ENCODE measurements at regions of chr7 and their contacts with region 1.

Region 1: DNA sequence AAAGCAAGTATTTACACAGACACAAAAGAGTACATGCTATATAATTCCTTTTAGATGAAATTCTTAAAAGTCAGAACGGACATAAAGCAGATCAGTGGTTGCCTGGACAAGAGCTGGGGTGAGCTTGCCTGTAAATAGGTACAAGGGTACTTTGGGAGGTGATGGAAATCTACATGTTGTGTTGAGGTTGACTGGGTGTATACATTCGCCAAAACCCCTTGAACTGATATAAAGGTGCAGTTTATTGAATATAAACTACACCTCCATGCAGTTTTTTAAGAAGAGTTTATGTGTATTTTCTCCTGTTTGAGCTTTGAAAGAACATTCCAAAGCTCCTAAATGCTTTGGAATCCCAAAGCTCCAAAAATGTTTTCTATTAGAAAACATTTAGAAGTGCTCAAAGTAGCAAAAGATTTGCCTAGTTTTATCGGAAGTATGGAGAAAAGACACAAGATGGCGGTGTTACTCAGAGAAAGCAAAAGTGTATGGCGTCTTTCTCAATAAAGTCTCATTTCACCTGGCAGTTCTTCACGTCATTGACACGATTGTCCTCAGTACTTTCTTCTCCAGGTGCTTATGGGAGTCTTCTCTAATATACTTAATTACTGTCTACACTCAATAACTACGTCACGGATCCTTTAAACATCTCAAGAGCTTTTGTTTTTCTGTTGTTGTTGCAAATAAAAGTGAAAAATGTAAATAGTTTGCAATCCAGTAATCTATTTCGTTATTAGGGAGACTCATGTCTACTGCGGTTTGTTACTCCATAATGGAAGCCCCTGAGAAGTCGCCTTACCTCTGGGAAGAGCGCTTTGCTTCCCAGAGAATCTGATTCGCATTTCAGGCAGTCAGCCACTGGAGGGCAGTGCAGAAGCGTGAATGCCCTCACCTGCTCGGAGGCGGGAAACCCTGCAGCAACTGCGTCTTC is 14.7 kb upstream of the SEC61G start:
- DNase-seq: peak; percentile 84
- ATAC-seq: peak; percentile 95
- H3K4me3 ChIP-seq: peak overlapping the region; percentile 31; the same call in 1 of the 2 replicates
- H3K27ac ChIP-seq: no peak overlapping the region
- H3K4me1 ChIP-seq: no peaks in the 10 kb centered on the region
- H3K27me3 ChIP-seq: no peaks in the 10 kb centered on the region
- CTCF ChIP-seq: peak; percentile 92
- POLR2A ChIP-seq: peak; percentile 53; the same call in 1 of the 2 replicates
- RAD21 ChIP-seq: peak; percentile 99

Region 2: GRCh38 chr7:54729107-54729506 is 44.6 kb before region 1 on chr7:
- CTCF ChIA-PET with region 1: no interaction called
- POLR2A ChIA-PET with region 1: no interaction called
- dilution Hi-C with region 1: no loop called
- in situ Hi-C with region 1: no loop called
- intact Hi-C with region 1: no loop called
- DNase-seq: no peak
- ATAC-seq: no peak
- H3K4me3 ChIP-seq: no peak overlapping the region
- H3K27ac ChIP-seq: no peak overlapping the region
- H3K4me1 ChIP-seq: no peaks in the 10 kb centered on the region
- H3K27me3 ChIP-seq: no peaks in the 10 kb centered on the region
- CTCF ChIP-seq: no peak
- POLR2A ChIP-seq: no peak
- RAD21 ChIP-seq: no peak

Region 3: GRCh38 chr7:54874804-54875203 is 101.1 kb after region 1 on chr7:
- CTCF ChIA-PET with region 1: no interaction called
- POLR2A ChIA-PET with region 1: no interaction called
- dilution Hi-C with region 1: no loop called
- in situ Hi-C with region 1: no loop called
- intact Hi-C with region 1: no loop called
- DNase-seq: peak; percentile 52
- ATAC-seq: peak; percentile 59; the same call in 1 of the 2 replicates
- H3K4me3 ChIP-seq: no peak overlapping the region
- H3K27ac ChIP-seq: no peak overlapping the region
- H3K4me1 ChIP-seq: peaks cover 1% of the 10 kb centered on the region; the same call in 1 of the 2 replicates
- H3K27me3 ChIP-seq: no peaks in the 10 kb centered on the region
- CTCF ChIP-seq: no peak
- POLR2A ChIP-seq: no peak
- RAD21 ChIP-seq: no peak

Region 4: DNA sequence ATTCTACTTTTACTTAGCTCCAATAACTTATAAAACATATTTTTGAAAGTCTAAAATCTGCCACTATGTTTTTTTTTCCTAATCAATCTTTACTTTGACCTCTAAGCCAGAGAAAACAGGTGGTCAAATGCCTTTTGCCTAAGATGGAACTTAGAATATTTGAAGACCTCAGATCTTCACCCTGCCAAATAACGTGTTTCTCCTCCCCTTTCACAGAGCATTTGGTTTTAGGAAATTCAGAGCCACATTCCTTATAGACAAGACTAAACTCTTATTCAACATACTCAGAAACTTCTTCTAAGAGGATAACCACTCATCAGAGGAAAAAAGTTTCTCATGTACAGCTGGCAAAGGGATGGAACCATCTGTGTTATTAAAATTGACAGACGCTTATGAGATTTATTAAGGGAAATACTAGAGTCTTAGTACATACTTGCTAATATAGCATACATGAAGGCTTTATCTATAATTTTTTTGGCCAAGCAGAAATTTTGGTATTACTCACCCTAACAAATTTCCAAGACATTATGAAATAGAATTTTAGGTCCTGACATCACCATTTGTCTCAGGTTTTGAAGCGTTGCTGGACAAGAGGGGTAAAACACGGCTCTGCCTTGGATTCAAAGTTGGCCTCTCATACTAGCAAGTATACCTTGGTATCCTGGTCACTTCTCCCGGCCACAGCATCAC is 242.5 kb after region 1 on chr7:
- CTCF ChIA-PET with region 1: no interaction called
- POLR2A ChIA-PET with region 1: no interaction called
- dilution Hi-C with region 1: no loop called
- in situ Hi-C with region 1: no loop called
- intact Hi-C with region 1: no loop called
- DNase-seq: no peak
- ATAC-seq: no peak
- H3K4me3 ChIP-seq: no peak overlapping the region
- H3K27ac ChIP-seq: no peak overlapping the region
- H3K4me1 ChIP-seq: peaks cover 6% of the 10 kb centered on the region
- H3K27me3 ChIP-seq: no peaks in the 10 kb centered on the region
- CTCF ChIP-seq: no peak
- POLR2A ChIP-seq: no peak
- RAD21 ChIP-seq: no peak

Region 5: DNA sequence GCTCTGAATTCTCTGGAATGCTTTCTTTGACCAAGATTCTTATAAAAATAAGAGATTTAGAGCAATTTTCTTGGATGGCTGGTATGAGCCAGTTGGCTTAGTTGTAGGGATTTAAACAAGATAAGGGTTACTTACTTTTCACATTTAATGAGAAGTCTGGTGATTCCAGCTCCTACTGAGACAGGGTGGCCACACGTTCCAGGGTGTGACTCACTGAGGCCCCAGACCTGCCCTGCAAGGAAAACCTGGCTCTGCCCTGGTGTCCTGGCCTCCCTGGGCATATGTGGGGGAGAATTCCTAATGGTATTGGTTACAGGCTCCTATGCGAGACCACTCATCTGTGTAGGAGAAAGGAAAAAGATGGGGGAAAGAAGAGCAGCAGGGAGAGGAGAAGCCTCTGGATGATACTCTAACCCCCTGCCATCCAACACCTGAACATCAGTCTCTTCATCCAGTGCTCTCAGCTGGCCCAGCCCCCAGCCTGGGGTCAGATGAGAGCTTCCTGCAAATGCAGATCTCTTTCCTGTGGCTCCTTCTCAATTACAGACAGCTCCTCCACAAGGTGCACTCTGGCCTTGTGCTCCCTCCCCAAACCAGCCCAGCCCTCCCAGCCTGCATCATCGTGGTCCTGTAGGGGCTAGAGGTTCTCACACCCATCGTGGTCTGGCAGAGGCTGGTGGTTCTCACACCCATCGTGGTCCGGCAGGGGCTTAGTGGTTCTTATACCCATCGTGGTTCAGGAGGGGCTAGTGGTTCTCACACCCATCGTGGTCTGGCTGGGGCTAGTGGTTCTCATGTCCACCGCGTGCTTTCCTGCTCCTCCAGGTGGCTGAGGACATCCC is 385.0 kb after region 1 on chr7:
- CTCF ChIA-PET with region 1: no interaction called
- POLR2A ChIA-PET with region 1: no interaction called
- dilution Hi-C with region 1: no loop called
- in situ Hi-C with region 1: loop called (anchors 25 kb)
- intact Hi-C with region 1: loop called (anchors 2 kb)
- DNase-seq: peak; percentile 69
- ATAC-seq: peak; percentile 15; the same call in 1 of the 2 replicates
- H3K4me3 ChIP-seq: no peak overlapping the region
- H3K27ac ChIP-seq: peak overlapping the region; percentile 43
- H3K4me1 ChIP-seq: peaks cover 25% of the 10 kb centered on the region
- H3K27me3 ChIP-seq: no peaks in the 10 kb centered on the region
- CTCF ChIP-seq: no peak
- POLR2A ChIP-seq: no peak
- RAD21 ChIP-seq: no peak

Region 6: DNA sequence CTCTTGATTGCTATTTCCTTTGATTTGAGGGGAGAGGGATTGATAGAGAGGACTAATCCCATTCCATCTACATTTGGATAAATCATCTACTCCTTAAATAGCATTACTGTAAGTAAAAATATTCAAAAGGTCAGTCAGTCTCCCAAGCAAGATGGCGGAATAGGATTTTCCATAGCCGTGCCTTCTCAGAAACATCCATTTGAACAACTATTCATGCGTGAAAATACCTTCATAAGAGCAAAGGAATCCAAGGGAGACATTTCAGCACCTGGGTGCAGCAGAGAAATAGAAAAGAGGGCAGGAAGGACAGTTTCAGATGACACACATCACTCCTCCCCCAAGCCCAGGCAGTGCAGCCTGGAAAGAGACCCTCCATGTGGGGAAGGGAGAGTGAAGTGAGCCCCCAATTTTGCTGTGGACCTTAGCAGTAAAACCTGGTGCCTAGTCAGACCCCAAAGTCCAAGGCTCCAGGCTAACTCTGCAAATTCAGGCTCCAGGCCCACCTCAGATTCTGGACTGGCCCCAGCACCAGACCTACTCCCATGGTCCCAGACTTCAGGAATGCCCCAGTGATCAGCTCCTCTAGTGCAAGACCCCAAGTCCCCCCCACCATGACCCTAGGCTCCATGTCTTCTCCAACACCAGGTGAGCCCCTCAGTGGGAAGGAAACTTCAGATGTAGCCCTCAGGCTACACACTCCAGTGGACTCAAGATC is 487.1 kb after region 1 on chr7:
- CTCF ChIA-PET with region 1: interaction called, 42 read pairs
- POLR2A ChIA-PET with region 1: no interaction called
- dilution Hi-C with region 1: no loop called
- in situ Hi-C with region 1: no loop called
- intact Hi-C with region 1: loop called (anchors 1 kb)
- DNase-seq: no peak
- ATAC-seq: no peak
- H3K4me3 ChIP-seq: no peak overlapping the region
- H3K27ac ChIP-seq: no peak overlapping the region
- H3K4me1 ChIP-seq: no peaks in the 10 kb centered on the region
- H3K27me3 ChIP-seq: peaks cover 14% of the 10 kb centered on the region
- CTCF ChIP-seq: no peak
- POLR2A ChIP-seq: no peak
- RAD21 ChIP-seq: no peak

Region 7: DNA sequence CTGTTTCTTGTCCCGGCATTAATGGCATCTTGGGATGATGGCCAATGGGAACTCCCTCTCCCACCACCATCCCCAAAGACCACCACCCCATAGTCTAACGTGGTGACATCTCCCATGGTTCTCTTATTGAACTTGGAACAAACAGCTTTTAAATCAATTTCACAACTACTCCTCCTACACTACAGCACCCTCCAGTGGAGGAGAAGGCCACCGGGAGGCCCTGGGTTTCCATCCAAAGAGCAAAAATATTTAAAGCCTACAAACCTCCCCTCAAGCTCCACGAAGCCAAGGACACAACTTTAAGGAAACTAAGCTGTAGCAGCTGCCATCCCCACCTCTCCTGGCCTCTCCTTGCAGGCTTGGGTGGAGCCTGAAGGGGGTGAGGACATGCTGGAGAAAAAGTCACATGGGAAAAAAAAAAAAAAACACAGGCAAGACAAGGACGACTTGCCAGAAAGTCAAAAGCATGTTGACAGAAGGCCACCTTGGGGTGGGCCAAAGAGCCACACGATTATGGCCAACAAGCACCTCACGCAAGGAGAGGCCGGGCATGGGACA is 497.4 kb after region 1 on chr7:
- CTCF ChIA-PET with region 1: interaction called, 12 read pairs
- POLR2A ChIA-PET with region 1: no interaction called
- dilution Hi-C with region 1: no loop called
- in situ Hi-C with region 1: no loop called
- intact Hi-C with region 1: loop called (anchors 1 kb)
- DNase-seq: peak; percentile 26
- ATAC-seq: peak; percentile 66
- H3K4me3 ChIP-seq: no peak overlapping the region
- H3K27ac ChIP-seq: no peak overlapping the region
- H3K4me1 ChIP-seq: peaks cover 2% of the 10 kb centered on the region; the same call in 1 of the 2 replicates
- H3K27me3 ChIP-seq: peaks cover 60% of the 10 kb centered on the region
- CTCF ChIP-seq: peak; percentile 63
- POLR2A ChIP-seq: no peak
- RAD21 ChIP-seq: peak; percentile 68

Region 8: GRCh38 chr7:55572378-55573233 is 798.9 kb after region 1 on chr7 and contains the start of gene VOPP1:
- CTCF ChIA-PET with region 1: no interaction called
- POLR2A ChIA-PET with region 1: no interaction called
- dilution Hi-C with region 1: no loop called
- in situ Hi-C with region 1: loop called (anchors 25 kb)
- intact Hi-C with region 1: loop called (anchors 10 kb)
- DNase-seq: peak; percentile 63
- ATAC-seq: peak; percentile 74
- H3K4me3 ChIP-seq: peak within 1 kb of the TSS; percentile 67
- H3K27ac ChIP-seq: peak within 1 kb of the TSS; percentile 92
- H3K4me1 ChIP-seq: peaks cover 28% of the 10 kb centered on the region
- H3K27me3 ChIP-seq: no peaks in the 10 kb centered on the region
- CTCF ChIP-seq: no peak
- POLR2A ChIP-seq: no peak
- RAD21 ChIP-seq: no peak
- total RNA-seq, gene VOPP1: 94.5 and 94.7 TPM in 2 replicates

Measured in IMR-90 (cell line).